ENCODE measurements at regions of chr20 and their contacts with region 1.

Region 1: GRCh38 chr20:2206957-2207769 is 88.6 kb upstream of the TGM3 start:
- DNase-seq: peak; percentile 77
- H3K4me3 ChIP-seq: peak overlapping the region; percentile 59
- H3K27ac ChIP-seq: no peak overlapping the region
- H3K4me1 ChIP-seq: no peaks in the 10 kb centered on the region
- H3K27me3 ChIP-seq: peaks cover 4% of the 10 kb centered on the region
- CTCF ChIP-seq: peak; percentile 82

Region 2: DNA sequence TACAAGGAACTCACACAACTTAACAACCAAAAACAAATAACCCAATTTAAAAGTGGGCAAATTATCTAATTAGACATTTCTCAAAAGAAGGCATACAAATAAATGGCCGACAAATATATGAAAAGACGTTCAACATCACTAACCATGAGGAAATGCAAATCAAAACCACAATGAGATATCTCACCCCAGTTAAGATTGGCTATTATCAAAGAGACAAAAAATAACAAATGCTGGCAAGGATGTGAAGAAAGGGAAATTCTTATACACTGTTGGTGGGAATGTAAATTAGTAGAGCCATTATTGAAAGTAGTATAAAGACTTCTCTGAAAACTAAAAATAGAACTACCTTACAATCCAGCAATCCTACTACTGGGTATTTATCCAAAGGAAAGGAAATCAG is 452.9 kb before region 1 on chr20:
- CTCF ChIA-PET with region 1: no interaction called
- POLR2A ChIA-PET with region 1: no interaction called
- intact Hi-C with region 1: no loop called
- DNase-seq: no peak
- H3K4me3 ChIP-seq: no peak overlapping the region
- H3K27ac ChIP-seq: no peak overlapping the region
- H3K4me1 ChIP-seq: no peaks in the 10 kb centered on the region
- H3K27me3 ChIP-seq: no peaks in the 10 kb centered on the region
- CTCF ChIP-seq: no peak

Region 3: DNA sequence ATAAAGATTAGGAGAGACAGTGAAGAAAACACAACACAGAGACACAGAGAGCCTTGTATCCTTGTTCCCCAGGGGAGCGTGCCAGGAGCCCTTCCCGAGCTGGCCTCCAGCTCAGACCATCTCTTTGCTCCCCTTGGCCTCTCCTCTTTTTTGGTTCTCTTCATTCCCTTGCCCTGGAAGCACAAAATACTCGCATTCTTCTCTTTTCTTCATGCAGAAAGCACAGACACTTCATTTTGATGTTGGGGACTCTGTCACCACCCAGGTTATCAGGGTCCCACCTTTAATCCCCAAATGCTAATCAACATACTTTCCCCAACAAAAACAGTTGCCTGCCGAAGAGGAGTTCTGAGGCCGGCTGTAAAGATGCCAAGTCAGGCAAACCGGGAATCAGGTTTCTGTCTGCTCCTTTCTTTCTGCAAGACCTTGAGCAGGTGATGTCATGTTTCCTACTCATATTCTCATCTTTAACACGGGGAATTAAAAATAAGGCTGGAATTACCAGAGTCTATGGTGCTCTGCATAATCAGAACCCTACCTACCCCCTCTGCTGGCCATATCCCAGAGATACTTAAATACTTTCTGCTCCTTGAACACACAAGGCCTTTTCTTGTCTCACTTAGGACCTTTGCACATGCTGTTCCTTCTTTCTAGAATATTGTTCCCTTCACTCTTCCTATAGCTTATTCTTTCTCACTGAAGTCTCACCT is 195.3 kb after region 1 on chr20:
- CTCF ChIA-PET with region 1: interaction called, 4 read pairs
- POLR2A ChIA-PET with region 1: no interaction called
- intact Hi-C with region 1: loop called (anchors 5 kb)
- DNase-seq: peak; percentile 37
- H3K4me3 ChIP-seq: no peak overlapping the region
- H3K27ac ChIP-seq: no peak overlapping the region
- H3K4me1 ChIP-seq: no peaks in the 10 kb centered on the region
- H3K27me3 ChIP-seq: no peaks in the 10 kb centered on the region
- CTCF ChIP-seq: peak; percentile 50; the same call in 1 of the 2 replicates

Region 4: GRCh38 chr20:2508631-2509467 is 301.7 kb after region 1 on chr20 and contains the start of gene ZNF343:
- CTCF ChIA-PET with region 1: no interaction called
- POLR2A ChIA-PET with region 1: no interaction called
- intact Hi-C with region 1: no loop called
- DNase-seq: peak; percentile 89
- H3K4me3 ChIP-seq: peak within 1 kb of the TSS; percentile 88
- H3K27ac ChIP-seq: peak within 1 kb of the TSS; percentile 94
- H3K4me1 ChIP-seq: peaks cover 6% of the 10 kb centered on the region
- H3K27me3 ChIP-seq: no peaks in the 10 kb centered on the region
- CTCF ChIP-seq: no peak
- total RNA-seq, gene ZNF343: 13.8 and 16.2 TPM in 2 replicates

Measured in A673 (cell line).